Ovary (tissue), 10 donors: ENCODE measurements at regions of chr3 and their contacts with region 1.

Region 1: GRCh38 chr3:4950351-4950784 is 28.9 kb upstream of the BHLHE40 start:
- DNase-seq: peak in 4 of 5 donors; percentile 39 to 67 (median 46)
- H3K4me3 ChIP-seq: no peak overlapping the region
- H3K27ac ChIP-seq: no peak overlapping the region
- H3K4me1 ChIP-seq: peaks cover 7% of the 10 kb centered on the region
- H3K27me3 ChIP-seq: no peaks in the 10 kb centered on the region
- CTCF ChIP-seq: no peak
- EP300 ChIP-seq: no peak
- POLR2A ChIP-seq: no peak

Region 2: GRCh38 chr3:4508048-4508981 is 442.1 kb before region 1 on chr3:
- intact Hi-C with region 1: no loop called
- DNase-seq: no peak
- H3K4me3 ChIP-seq: no peak overlapping the region
- H3K27ac ChIP-seq: no peak overlapping the region
- H3K4me1 ChIP-seq: peaks cover 41% of the 10 kb centered on the region
- H3K27me3 ChIP-seq: no peaks in the 10 kb centered on the region
- CTCF ChIP-seq: no peak
- EP300 ChIP-seq: no peak
- POLR2A ChIP-seq: no peak

Region 3: DNA sequence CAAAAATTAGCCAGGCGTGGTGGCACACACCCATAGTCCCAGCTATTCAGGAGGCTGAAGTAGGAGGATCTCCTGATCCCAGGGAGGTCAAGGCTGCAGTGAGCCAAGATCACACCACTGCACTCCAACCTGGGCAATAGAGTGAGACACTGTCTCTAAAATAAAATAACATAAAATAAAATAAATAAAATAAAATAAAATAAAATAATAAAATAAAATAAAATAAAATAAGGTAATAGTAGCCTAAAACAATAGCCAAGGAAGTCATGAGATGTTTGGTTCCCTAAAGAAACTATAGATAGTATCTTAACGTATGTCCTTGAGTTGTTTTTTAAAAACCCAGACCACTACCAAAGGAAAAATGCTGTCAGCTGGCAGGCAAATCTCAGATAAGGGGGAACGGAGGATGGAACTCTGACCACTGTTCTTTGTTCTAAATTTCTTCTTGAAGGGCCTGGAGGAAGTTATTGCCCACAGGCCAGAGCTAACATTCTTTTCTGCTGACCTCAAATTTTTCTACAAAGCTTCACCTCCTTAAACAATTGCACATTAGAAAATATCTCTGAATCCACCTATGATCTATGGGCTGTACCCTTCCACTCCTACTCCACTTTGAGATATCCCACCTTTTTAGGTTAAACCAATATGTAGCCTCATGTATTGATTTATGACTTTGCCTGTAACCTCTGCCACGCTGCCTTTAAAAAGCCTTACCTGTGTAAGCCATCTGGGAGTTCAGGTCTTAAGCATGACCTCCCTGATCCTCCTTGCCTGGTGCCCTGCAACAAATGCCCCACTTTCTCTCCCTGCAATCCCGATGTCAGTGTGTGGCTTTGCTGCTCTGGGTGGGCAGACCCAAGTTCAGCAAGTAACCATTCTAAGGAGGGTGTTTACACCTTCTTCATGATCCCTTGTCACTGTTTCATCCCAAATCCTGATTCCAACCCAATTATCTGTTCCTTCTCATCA is 97.3 kb before region 1 on chr3:
- intact Hi-C with region 1: no loop called
- DNase-seq: no peak
- H3K4me3 ChIP-seq: no peak overlapping the region
- H3K27ac ChIP-seq: no peak overlapping the region
- H3K4me1 ChIP-seq: no peaks in the 10 kb centered on the region
- H3K27me3 ChIP-seq: no peaks in the 10 kb centered on the region
- CTCF ChIP-seq: no peak
- EP300 ChIP-seq: no peak
- POLR2A ChIP-seq: no peak

Region 4: DNA sequence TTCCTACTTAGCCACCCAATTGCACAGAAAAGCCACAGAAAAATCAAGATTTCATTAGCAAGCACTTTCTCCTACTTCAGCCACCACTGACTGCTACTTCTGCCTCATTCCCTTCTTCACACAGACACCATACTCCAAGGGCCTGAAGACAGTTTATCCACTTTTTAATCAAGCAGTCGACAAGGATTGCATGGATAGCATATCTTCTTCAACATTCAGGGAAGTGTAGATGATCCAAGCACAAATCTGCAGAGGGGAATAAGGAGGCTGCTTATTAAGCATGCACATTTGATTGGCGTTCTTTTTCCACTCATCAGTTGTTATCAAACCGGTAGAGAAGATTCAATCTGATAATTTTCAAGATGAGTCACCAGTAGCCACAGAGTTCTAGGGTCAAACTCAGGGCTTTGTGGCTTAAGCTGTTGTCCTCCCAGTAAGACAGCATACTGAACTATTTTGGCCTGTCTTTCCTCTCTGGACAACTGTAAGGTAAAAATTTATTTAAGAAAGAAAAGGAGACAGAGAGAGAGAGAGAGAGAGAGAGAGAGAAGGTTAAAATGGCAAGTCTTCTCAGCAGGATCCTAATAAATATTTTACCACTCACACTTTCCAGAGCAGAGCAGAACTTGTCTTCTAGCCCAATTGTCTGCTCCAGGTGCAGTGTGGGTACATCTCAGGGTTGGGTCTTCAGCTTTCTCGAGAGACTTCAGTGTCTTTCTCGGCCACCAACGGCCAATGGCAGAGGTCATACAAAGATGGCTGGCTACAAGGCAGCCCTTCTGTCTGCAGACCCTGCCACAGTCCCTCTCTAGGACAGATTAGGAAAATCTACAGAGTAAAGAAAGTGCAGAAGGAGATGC is 51.7 kb before region 1 on chr3:
- intact Hi-C with region 1: loop called in 1 of 4 experiments (anchors 10 kb)
- DNase-seq: no peak
- H3K4me3 ChIP-seq: no peak overlapping the region
- H3K27ac ChIP-seq: peak overlapping the region in 1 of 2 donors; percentile 56
- H3K4me1 ChIP-seq: peaks cover 10% of the 10 kb centered on the region
- H3K27me3 ChIP-seq: no peaks in the 10 kb centered on the region
- CTCF ChIP-seq: no peak
- EP300 ChIP-seq: no peak
- POLR2A ChIP-seq: no peak